Activated B cell treated with CpG ODN at 0.5 μM for 24 hours (primary cell): ENCODE measurements at regions of chr7 and their contacts with region 1.

Region 1: DNA sequence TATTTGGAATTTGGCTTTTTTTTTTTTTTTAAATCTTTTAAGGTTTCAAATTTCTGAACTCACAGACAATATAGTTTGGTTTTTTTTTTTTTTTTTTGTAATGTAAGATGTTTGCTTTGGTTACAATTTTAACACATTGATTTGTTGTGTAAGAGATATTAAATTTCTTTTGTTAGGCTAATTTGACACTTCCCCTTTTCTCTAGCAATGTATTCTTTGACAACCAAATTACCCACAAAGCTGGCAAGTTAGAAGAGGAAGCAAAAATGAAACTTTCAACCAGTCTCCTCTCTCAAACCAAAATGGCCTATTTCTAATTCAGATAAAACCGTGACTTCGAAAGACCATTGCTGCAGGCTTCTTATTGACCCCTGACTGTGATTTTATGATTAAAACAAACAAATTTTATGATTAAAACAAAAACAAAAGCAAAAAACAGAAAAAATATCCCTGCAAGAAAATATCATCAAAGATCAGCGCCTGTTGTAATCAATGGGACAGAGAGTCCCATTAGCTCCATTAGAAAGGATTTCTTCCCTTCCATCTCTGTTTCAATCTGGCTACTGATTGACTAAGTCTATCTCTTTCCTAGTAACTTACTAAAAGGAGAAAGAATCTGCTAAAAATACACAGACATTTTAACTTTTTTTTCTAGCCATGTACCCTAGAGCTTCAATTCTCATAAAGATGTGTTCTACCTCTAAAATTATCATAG is 489.2 kb downstream of the MDFIC start:
- DNase-seq: no peak
- ATAC-seq: peak; percentile 86
- H3K4me3 Mint-ChIP-seq: peak overlapping the region; percentile 73
- H3K27ac Mint-ChIP-seq: peak overlapping the region; percentile 91
- H3K4me1 Mint-ChIP-seq: peaks cover 27% of the 10 kb centered on the region
- H3K27me3 Mint-ChIP-seq: peaks cover 2% of the 10 kb centered on the region
- CTCF ChIP-seq: no peak

Region 2: DNA sequence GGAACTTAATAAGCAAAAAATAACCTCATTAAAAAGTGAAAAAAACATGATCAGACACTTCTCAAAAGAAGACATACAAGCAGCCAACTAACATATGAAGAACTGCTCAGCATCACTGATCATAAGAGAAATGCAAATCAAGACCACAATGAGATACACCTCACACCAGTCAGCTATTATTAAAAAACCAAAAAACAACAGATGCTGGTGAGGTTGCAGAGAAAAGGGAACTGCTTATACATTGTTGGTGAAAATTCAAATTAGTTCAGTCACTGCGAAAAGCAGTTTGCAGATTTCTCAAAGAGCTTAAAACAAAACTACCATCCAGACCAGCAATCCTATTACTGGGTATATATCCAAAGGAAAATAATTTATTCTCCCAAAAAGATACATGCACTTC is 24.0 kb after region 1 on chr7:
- CTCF ChIA-PET with region 1: no interaction called
- POLR2A ChIA-PET with region 1: no interaction called
- intact Hi-C with region 1: loop called (anchors 2 kb)
- DNase-seq: no peak
- ATAC-seq: peak; percentile 81
- H3K4me3 Mint-ChIP-seq: peak overlapping the region; percentile 19
- H3K27ac Mint-ChIP-seq: peak overlapping the region; percentile 64
- H3K4me1 Mint-ChIP-seq: peaks cover 34% of the 10 kb centered on the region
- H3K27me3 Mint-ChIP-seq: no peaks in the 10 kb centered on the region
- CTCF ChIP-seq: no peak